Activated T-helper 1 cell treated with anti-CD3 and anti-CD28 coated beads, Interleukin-12 subunit alpha, Interleukin-12 subunit beta, Interleukin-2, Interleukin-4 antibody, amounts not matched to agents 30 ng/mL and 10 ng/mL and 1 ng/mL, durations not matched to agents 14 hours and 24 hours and 36 hours (primary cell): ENCODE measurements at regions of chr1 and their contacts with region 1.

Region 1: DNA sequence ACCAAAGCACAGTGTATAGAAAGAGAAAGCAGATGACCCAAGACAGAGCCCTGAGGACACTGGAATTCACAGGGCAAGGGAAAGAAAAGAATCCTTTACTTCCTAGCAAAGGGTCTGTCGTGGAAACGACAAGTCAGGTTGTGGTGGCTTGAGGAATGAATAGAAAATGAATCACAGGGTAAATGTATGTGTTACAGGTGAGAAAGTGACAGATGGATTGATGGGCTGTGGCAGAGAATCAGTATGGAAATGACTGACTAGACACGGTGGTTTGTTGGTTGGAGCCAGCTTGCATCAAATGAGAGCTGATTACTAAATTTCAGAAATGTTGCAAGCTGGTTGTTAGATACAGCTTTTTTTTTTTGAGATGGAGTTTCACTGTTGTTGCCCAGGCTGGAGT is 46.9 kb downstream of the PTP4A2 start:
- DNase-seq: peak; percentile 34
- H3K4me3 Mint-ChIP-seq: peak overlapping the region; percentile 29
- H3K27ac Mint-ChIP-seq: peak overlapping the region; percentile 54
- H3K4me1 Mint-ChIP-seq: peaks cover 38% of the 10 kb centered on the region
- H3K27me3 Mint-ChIP-seq: no peaks in the 10 kb centered on the region

Region 2: GRCh38 chr1:31789259-31790065 is 101.8 kb before region 1 on chr1:
- intact Hi-C with region 1: loop called (anchors 1 kb)
- DNase-seq: peak; percentile 91
- H3K4me3 Mint-ChIP-seq: peak overlapping the region; percentile 89
- H3K27ac Mint-ChIP-seq: no peak overlapping the region
- H3K4me1 Mint-ChIP-seq: peaks cover 16% of the 10 kb centered on the region
- H3K27me3 Mint-ChIP-seq: peaks cover 4% of the 10 kb centered on the region

Region 3: DNA sequence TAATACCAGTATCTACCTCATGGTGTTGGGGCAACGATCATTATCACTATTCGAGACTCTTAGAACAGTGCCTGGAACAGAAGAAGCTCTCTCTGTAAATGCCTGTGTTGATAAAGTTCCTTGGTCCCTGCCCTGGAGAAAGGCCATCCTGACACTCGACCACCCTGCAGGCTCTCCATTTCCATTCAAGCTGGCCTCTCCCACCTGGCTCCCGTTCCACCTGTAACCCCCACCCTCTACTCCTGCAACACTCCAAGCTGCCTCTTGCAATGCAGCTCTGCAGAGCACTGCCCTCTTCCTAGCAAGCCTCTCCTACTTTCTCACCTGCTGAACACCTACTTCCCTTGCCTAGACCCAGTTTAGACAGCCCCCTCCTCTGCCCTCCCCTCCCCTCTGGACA is 81.6 kb before region 1 on chr1:
- intact Hi-C with region 1: no loop called
- DNase-seq: no peak
- H3K4me3 Mint-ChIP-seq: no peak overlapping the region
- H3K27ac Mint-ChIP-seq: no peak overlapping the region
- H3K4me1 Mint-ChIP-seq: peaks cover 5% of the 10 kb centered on the region
- H3K27me3 Mint-ChIP-seq: peaks cover 15% of the 10 kb centered on the region

Region 4: GRCh38 chr1:31848381-31848897 is 42.8 kb before region 1 on chr1:
- intact Hi-C with region 1: loop called (anchors 1 kb)
- DNase-seq: peak; percentile 33
- H3K4me3 Mint-ChIP-seq: peak overlapping the region; percentile 61
- H3K27ac Mint-ChIP-seq: peak overlapping the region; percentile 76
- H3K4me1 Mint-ChIP-seq: peaks cover 52% of the 10 kb centered on the region
- H3K27me3 Mint-ChIP-seq: peaks cover 2% of the 10 kb centered on the region

Region 5: GRCh38 chr1:31872658-31873636 is 18.3 kb before region 1 on chr1:
- intact Hi-C with region 1: loop called (anchors 1 kb)
- DNase-seq: no peak
- H3K4me3 Mint-ChIP-seq: no peak overlapping the region
- H3K27ac Mint-ChIP-seq: peak overlapping the region; percentile 82
- H3K4me1 Mint-ChIP-seq: peaks cover 19% of the 10 kb centered on the region
- H3K27me3 Mint-ChIP-seq: peaks cover 5% of the 10 kb centered on the region

Region 6: DNA sequence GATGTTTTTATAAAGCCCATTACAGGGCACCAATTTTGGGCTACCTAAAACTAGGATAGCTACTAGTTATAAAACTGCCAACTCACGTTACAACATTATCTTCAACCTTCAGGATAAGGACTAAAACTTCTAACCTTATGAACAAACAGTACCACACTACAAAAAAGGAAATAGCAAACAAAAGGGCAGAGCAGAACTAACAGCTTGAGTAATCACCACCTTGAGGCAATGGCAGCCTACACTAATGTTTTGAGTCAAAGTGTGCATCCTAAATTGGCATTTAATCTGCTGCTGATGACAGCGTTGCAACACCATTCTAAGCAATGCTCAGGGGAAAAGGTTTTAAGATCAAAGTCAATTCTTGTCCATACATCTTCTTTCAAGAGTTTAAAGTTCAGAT is 19.7 kb after region 1 on chr1:
- intact Hi-C with region 1: loop called (anchors 1 kb)
- DNase-seq: no peak
- H3K4me3 Mint-ChIP-seq: peak overlapping the region; percentile 1
- H3K27ac Mint-ChIP-seq: peak overlapping the region; percentile 33
- H3K4me1 Mint-ChIP-seq: peaks cover 51% of the 10 kb centered on the region
- H3K27me3 Mint-ChIP-seq: no peaks in the 10 kb centered on the region

Region 7: DNA sequence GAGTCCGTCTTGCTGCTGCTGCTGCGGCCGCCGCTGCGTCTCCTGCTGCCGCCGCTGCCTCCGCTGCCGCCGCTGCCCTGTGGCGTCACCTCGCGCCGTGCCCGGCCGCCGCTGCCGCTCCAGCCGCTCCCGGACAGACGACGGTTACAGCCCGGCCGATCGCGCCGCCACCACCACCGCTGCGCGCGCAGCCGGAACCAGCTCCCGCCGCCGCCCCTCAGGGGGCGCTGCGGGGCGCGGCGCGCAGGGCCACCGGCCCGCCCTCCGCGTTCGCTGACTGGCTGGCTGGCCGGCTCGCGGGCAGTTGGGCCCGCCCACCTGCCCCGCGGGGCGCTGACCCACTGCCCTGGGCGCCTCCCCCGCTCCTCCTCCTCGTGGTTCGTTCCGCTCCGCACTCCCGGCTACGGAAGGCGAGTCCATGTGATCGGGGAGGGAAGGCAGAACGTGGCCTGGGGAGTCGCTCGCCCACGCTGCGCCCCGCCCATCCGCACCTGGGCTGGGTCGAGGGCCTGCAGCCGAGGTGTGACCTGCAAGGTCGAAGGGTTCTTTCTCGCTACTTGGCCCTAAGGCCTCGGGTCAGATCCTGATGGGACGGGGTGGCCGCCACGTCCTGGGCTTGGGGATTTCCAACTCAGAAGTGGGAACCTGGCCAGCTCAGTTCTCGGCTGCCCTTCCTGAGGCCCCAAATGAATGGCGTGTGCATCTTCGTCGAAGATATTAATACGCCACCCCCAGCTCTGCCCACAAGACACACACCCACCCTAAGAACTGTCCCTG is 47.1 kb after region 1 on chr1 and contains the start of gene PTP4A2:
- intact Hi-C with region 1: loop called (anchors 1 kb)
- DNase-seq: peak; percentile 88
- H3K4me3 Mint-ChIP-seq: peak within 1 kb of the TSS; percentile 100
- H3K27ac Mint-ChIP-seq: peak within 1 kb of the TSS; percentile 99
- H3K4me1 Mint-ChIP-seq: peaks cover 63% of the 10 kb centered on the region
- H3K27me3 Mint-ChIP-seq: no peaks in the 10 kb centered on the region
- total RNA-seq, gene PTP4A2: 390 and 421 TPM in 2 replicates